ENCODE measurements at regions of chr5 and their contacts with region 1.

Region 1: DNA sequence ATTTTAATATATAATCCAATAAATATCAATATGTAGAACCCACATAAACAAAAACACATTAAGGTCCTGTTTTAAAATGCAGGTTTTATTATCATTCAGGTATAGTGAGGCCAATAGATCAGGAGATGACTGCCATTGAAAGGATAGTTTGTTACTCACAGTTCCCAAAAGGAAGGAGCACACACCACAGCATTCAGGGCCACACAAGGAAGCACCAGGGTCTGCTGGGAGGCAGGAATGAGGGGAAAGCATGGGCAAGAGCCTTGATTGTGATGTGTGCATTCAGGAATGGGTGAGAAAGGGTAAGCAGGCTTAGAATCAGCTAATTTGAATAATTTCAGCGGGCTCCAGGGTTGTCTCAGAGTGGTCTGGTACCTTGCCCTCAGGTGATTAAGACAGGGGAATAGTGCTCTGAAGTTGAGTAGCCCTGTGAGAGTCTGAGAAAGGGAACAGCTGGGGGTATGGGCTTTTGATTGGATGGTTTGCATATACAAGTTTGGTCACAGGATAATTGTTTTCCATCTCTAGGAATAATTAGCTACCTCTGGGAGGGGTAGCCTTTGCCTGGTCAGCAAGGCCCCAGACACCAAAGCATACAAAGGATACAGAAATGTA is 19.8 kb upstream of the OTULIN start:
- DNase-seq: no peak
- ATAC-seq: no peak
- H3K4me3 ChIP-seq: no peak overlapping the region
- H3K27ac ChIP-seq: no peak overlapping the region
- H3K4me1 ChIP-seq: no peaks in the 10 kb centered on the region
- H3K27me3 ChIP-seq: peaks cover 18% of the 10 kb centered on the region
- CTCF ChIP-seq: no peak
- POLR2A ChIP-seq: no peak
- RAD21 ChIP-seq: no peak

Region 2: GRCh38 chr5:13957032-13957645 is 687.6 kb before region 1 on chr5:
- CTCF ChIA-PET with region 1: interaction called, 11 read pairs
- POLR2A ChIA-PET with region 1: no interaction called
- RAD21 ChIA-PET with region 1: no interaction called
- intact Hi-C with region 1: no loop called
- DNase-seq: peak; percentile 41
- ATAC-seq: peak; percentile 96
- H3K4me3 ChIP-seq: no peak overlapping the region
- H3K27ac ChIP-seq: no peak overlapping the region
- H3K4me1 ChIP-seq: peaks cover 0 to 7% of the 10 kb centered on the region in 2 experiments; a peak in 1 of 4 replicates
- H3K27me3 ChIP-seq: peaks cover 3% of the 10 kb centered on the region; the same call in 1 of the 2 replicates
- CTCF ChIP-seq: peak; percentile 18 to 87 (median 67); a peak in 5 of 6 replicates
- POLR2A ChIP-seq: no peak
- RAD21 ChIP-seq: peak; percentile 68

Region 3: DNA sequence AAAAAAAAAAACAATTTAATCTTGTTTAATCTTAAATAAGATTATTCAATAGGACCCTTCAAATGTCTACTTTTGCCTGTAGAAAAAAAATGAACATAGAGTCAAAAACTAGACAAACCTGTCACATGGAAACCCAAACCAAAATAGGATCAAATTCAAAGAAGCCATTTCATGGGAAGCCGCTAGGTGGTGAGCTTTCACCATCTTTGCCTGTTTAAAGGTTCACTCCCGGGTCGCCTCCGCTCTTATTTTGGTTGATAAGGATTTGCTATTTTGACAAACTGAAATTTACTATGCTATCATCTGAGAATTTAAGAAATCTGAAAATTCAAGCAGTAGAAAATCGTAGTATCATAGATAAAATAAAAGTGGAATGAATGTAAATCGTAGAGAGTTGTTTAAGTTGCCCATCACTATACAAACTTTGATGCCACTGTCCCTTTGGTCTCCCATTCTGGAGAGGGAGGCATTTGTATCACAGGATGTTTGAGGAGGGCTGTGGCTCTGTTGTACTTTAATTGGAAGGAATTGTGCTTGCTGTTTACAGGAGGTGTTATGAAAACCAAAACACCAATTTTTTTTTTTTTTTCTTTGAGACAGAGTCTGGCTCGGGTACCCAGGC is 656.8 kb before region 1 on chr5:
- CTCF ChIA-PET with region 1: interaction called, 23 read pairs
- POLR2A ChIA-PET with region 1: no interaction called
- RAD21 ChIA-PET with region 1: no interaction called
- intact Hi-C with region 1: loop called (anchors 1 kb)
- DNase-seq: peak; percentile 42
- ATAC-seq: peak; percentile 64
- H3K4me3 ChIP-seq: no peak overlapping the region
- H3K27ac ChIP-seq: no peak overlapping the region
- H3K4me1 ChIP-seq: peaks cover 7 to 14% of the 10 kb centered on the region in 2 experiments
- H3K27me3 ChIP-seq: no peaks in the 10 kb centered on the region
- CTCF ChIP-seq: peak; percentile 72 to 92 (median 75)
- POLR2A ChIP-seq: no peak
- RAD21 ChIP-seq: peak; percentile 92

Region 4: GRCh38 chr5:14351845-14352712 is 292.7 kb before region 1 on chr5:
- CTCF ChIA-PET with region 1: interaction called, 60 read pairs
- POLR2A ChIA-PET with region 1: no interaction called
- RAD21 ChIA-PET with region 1: interaction called, 5 to 7 read pairs
- intact Hi-C with region 1: loop called (anchors 2 kb)
- DNase-seq: peak; percentile 27
- ATAC-seq: peak; percentile 99
- H3K4me3 ChIP-seq: no peak overlapping the region
- H3K27ac ChIP-seq: no peak overlapping the region
- H3K4me1 ChIP-seq: no peaks in the 10 kb centered on the region
- H3K27me3 ChIP-seq: no peaks in the 10 kb centered on the region
- CTCF ChIP-seq: peak; percentile 38 to 98 (median 94); a peak in 5 of 6 replicates
- POLR2A ChIP-seq: no peak
- RAD21 ChIP-seq: peak; percentile 54

Region 5: DNA sequence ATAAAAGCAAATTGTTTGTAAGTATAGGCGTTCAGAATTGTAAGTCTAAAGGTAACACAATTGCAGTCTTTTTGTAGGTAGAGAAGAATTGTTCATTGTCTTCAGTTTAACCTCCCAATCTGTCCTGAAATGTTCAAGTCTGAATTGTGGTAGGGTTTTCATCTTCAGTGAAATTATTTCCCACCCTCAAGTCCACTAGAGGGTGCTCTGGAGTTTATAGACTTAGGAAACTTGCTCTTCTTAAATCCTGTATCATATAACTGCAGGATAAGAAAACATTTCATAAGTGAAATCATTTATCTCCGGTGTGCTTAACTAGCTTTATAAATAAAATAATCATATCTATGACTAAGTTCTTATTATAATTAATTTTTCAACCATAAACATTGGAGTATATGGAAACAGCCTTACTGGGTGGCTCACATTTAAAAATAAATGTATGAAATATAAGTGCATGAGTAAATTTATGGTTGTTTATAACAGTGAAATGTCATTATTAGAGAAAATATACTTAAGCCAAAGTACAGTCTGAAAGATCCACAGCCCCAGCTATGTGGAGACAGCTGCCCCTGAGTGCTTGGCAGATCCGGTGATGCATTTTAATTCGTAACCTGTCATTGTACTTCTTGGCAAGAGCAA is 245.6 kb before region 1 on chr5:
- CTCF ChIA-PET with region 1: interaction called, 17 read pairs
- POLR2A ChIA-PET with region 1: no interaction called
- RAD21 ChIA-PET with region 1: interaction called in 1 of 2 experiments, 3 read pairs
- intact Hi-C with region 1: loop called (anchors 1 kb)
- DNase-seq: peak; percentile 21
- ATAC-seq: peak; percentile 70; the same call in 1 of the 2 replicates
- H3K4me3 ChIP-seq: no peak overlapping the region
- H3K27ac ChIP-seq: no peak overlapping the region
- H3K4me1 ChIP-seq: peaks cover 0 to 8% of the 10 kb centered on the region in 2 experiments; a peak in 1 of 4 replicates
- H3K27me3 ChIP-seq: no peaks in the 10 kb centered on the region
- CTCF ChIP-seq: peak in 2 of 3 experiments; percentile 63 to 67; a peak in 4 of 6 replicates
- POLR2A ChIP-seq: no peak
- RAD21 ChIP-seq: peak; percentile 43